ENCODE measurements at regions of chr2 and their contacts with region 1.

Region 1: DNA sequence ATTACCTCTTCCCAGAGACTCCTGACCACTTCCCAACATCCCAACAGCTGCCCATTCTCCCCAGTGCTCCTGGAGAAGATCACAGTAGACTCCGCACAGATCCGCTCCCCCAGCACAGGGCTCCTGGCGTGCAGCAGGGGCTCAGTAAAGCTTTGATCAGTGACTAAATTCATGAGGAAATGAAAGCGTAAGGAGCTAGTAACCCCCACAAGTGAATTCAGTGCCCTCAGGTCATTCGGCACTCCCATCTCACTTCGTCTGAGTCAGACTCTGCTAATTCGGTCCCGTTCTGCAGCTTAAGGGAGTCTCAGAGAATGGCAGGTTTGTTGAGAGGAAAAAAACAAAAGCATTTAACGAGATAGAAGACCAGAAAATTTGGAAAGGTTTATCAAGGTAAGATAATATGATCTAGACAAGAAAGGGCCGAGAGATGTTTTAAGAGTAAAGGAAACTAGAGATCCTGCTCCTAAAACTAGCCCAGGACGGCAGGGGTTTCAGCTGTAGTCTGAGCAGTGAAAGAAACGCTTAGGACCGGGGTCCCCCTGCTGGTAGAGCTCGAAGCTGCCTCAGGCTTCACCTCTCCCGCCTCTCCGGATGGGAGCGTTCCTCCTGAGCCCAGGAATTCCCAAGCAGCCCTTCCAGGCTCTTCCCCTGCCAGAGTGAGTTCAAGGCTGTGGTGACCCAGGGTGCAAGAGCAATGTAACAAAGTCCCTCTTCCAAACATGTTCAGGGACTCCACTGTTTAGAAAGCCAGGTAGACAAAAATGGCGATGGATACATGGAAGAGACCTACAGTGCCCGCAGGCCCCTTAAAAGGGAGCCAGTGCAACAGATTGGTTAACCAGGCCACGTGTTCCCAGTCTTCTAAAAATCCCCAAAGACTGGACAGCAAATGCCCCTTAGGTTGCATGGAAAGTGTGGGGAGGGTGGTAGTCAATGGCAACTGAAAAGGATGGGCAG is 127.3 kb downstream of the DNER start:
- DNase-seq: peak; percentile 70 to 91
- H3K4me3 ChIP-seq: no peak overlapping the region
- H3K27ac ChIP-seq: no peak overlapping the region
- H3K4me1 ChIP-seq: peaks cover 0 to 5% (median under 1%) of the 10 kb centered on the region in 4 experiments; a peak in 3 of 7 replicates
- H3K27me3 ChIP-seq: no peaks in the 10 kb centered on the region
- CTCF ChIP-seq: peak; percentile 92 to 95 (median 93)
- EP300 ChIP-seq: no peak
- POLR2A ChIP-seq: no peak
- RAD21 ChIP-seq: peak; percentile 94 to 97

Region 2: GRCh38 chr2:228689053-228689452 is 898.0 kb before region 1 on chr2:
- CTCF ChIA-PET with region 1: interaction called, 11 read pairs
- POLR2A ChIA-PET with region 1: no interaction called
- DNase-seq: peak; percentile 38 to 68
- H3K4me3 ChIP-seq: no peak overlapping the region
- H3K27ac ChIP-seq: no peak overlapping the region
- H3K4me1 ChIP-seq: no peaks in the 10 kb centered on the region
- H3K27me3 ChIP-seq: no peaks in the 10 kb centered on the region
- CTCF ChIP-seq: peak; percentile 83 to 87 (median 85)
- EP300 ChIP-seq: no peak
- POLR2A ChIP-seq: no peak
- RAD21 ChIP-seq: peak; percentile 96 to 97

Region 3: GRCh38 chr2:229342376-229342775 is 244.7 kb before region 1 on chr2:
- CTCF ChIA-PET with region 1: interaction called, 56 read pairs
- POLR2A ChIA-PET with region 1: no interaction called
- DNase-seq: peak; percentile 38 to 89
- H3K4me3 ChIP-seq: no peak overlapping the region
- H3K27ac ChIP-seq: no peak overlapping the region
- H3K4me1 ChIP-seq: no peaks in the 10 kb centered on the region
- H3K27me3 ChIP-seq: no peaks in the 10 kb centered on the region
- CTCF ChIP-seq: peak; percentile 84 to 85 (median 84)
- EP300 ChIP-seq: no peak
- POLR2A ChIP-seq: no peak
- RAD21 ChIP-seq: peak; percentile 82 to 87

Region 4: GRCh38 chr2:229431327-229431954 is 155.6 kb before region 1 on chr2:
- CTCF ChIA-PET with region 1: interaction called, 43 read pairs
- POLR2A ChIA-PET with region 1: no interaction called
- DNase-seq: no peak
- H3K4me3 ChIP-seq: no peak overlapping the region
- H3K27ac ChIP-seq: no peak overlapping the region
- H3K4me1 ChIP-seq: no peaks in the 10 kb centered on the region
- H3K27me3 ChIP-seq: no peaks in the 10 kb centered on the region
- CTCF ChIP-seq: peak in 2 of 3 experiments; percentile 30 to 36; a peak in 2 of 4 replicates
- EP300 ChIP-seq: no peak
- POLR2A ChIP-seq: no peak
- RAD21 ChIP-seq: peak in 1 of 2 experiments; percentile 55

Region 5: DNA sequence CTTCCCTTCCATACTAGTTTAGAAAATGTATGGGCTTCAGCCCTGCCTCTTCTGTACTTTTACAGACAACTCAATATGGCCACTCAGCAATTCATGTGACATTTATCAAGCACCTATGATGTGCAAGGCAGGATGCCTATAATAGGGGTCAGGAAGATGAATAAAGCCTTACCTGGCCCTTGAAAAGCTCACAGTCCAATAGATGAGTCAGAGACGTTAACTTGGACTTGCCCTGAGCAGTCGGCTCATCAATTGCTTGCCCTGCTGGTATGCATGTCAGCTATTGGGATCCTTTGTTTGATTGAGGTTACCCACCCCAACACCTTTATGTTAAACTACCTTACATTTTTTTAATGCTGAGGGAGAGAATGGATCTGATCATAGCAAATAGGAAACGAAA is 11.2 kb after region 1 on chr2:
- CTCF ChIA-PET with region 1: interaction called, 16 read pairs
- POLR2A ChIA-PET with region 1: no interaction called
- DNase-seq: no peak
- H3K4me3 ChIP-seq: no peak overlapping the region
- H3K27ac ChIP-seq: no peak overlapping the region
- H3K4me1 ChIP-seq: no peaks in the 10 kb centered on the region
- H3K27me3 ChIP-seq: peaks cover 0 to 1% (median 0%) of the 10 kb centered on the region in 4 experiments; a peak in 1 of 7 replicates
- CTCF ChIP-seq: no peak
- EP300 ChIP-seq: no peak
- POLR2A ChIP-seq: no peak
- RAD21 ChIP-seq: no peak

Region 6: GRCh38 chr2:229620759-229621158 is 33.7 kb after region 1 on chr2:
- CTCF ChIA-PET with region 1: no interaction called
- POLR2A ChIA-PET with region 1: no interaction called
- DNase-seq: no peak
- H3K4me3 ChIP-seq: no peak overlapping the region
- H3K27ac ChIP-seq: no peak overlapping the region
- H3K4me1 ChIP-seq: peaks cover 0 to 3% (median 1%) of the 10 kb centered on the region in 4 experiments; a peak in 3 of 7 replicates
- H3K27me3 ChIP-seq: no peaks in the 10 kb centered on the region
- CTCF ChIP-seq: no peak
- EP300 ChIP-seq: no peak
- POLR2A ChIP-seq: no peak
- RAD21 ChIP-seq: no peak

Region 7: DNA sequence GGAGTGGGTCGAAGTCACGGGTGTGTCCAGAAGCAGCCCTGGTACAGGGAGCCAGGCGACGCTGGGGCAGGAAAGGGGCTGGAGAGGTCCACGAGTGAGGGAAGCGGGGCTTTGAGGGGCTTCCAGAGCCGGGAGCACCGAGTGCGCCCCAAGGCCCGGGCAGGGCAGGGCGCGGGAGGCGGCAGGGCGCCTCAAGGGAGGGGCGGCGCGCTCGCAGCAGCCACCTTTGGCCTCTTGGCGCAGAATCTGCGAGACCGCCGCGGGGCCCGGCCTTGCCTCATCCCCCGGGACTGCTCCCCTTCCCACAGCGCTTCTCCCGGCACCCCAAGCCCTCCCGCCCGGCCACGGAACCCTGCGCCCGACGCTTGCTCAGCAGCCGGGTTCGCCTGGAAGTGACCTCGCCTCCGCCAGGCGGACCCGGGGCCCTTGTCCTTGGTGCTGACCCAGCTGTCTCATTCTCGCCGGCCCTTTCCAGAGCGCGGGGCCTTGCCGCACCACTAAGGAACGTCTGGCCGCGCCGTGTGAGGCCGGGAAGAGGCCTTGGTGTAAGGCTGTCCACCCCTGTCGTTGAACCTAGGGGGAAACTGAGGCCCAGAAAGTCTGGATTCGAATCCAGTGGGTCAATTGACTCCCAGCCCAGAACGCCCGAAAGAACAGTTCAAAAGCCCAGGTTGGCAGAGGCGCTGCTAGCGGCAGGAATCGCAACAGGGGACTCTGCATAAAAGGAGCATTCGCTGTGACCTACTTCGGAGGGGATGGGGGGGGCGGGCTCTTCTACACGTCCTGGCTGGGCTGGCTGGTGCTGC is 127.9 kb after region 1 on chr2:
- CTCF ChIA-PET with region 1: interaction called, 10 read pairs
- POLR2A ChIA-PET with region 1: no interaction called
- DNase-seq: peak; percentile 56 to 92
- H3K4me3 ChIP-seq: peak overlapping the region; percentile 25 to 80 (median 58)
- H3K27ac ChIP-seq: no peak overlapping the region
- H3K4me1 ChIP-seq: peaks cover 0 to 8% (median 2%) of the 10 kb centered on the region in 4 experiments; a peak in 5 of 7 replicates
- H3K27me3 ChIP-seq: peaks cover 1 to 16% (median 13%) of the 10 kb centered on the region in 4 experiments
- CTCF ChIP-seq: no peak
- EP300 ChIP-seq: no peak
- POLR2A ChIP-seq: no peak
- RAD21 ChIP-seq: no peak

Region 8: GRCh38 chr2:229753330-229753729 is 166.3 kb after region 1 on chr2:
- CTCF ChIA-PET with region 1: no interaction called
- POLR2A ChIA-PET with region 1: no interaction called
- DNase-seq: no peak
- H3K4me3 ChIP-seq: no peak overlapping the region
- H3K27ac ChIP-seq: no peak overlapping the region
- H3K4me1 ChIP-seq: peaks cover 0 to 4% (median 0%) of the 10 kb centered on the region in 4 experiments; a peak in 3 of 7 replicates
- H3K27me3 ChIP-seq: no peaks in the 10 kb centered on the region
- CTCF ChIP-seq: no peak
- EP300 ChIP-seq: no peak
- POLR2A ChIP-seq: no peak
- RAD21 ChIP-seq: no peak